ENCODE measurements at regions of chr13 and their contacts with region 1.

Region 1: DNA sequence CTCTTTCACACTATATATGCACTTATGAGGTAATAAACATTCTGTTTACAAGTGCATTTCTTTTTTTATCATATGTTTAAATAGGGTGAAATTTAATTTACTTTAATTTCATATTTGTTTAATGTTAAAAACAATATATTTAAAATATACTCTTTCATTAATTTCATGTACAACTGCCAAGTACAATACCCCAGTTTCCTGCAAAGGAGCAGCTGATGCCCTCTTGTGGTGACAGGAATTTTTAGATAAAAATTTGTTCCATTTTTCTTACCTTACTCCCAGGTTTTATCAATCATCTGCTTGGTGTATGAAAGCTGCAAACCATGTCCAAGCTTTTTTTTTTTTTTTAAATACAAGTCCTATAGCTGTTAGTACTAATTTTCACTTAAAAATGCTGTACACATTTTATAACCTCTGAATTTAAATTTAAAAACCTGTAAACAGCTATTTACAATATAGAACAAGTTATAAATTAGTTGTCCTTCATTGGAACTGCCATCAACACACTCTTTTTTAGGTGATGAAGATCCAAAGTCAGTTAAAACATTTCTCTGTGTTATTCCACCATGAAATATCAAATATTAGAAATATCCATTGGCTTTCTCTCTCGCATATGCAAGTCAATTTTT is 4.9 kb downstream of the PCDH20 start:
- DNase-seq: no peak
- ATAC-seq: no peak

Region 2: DNA sequence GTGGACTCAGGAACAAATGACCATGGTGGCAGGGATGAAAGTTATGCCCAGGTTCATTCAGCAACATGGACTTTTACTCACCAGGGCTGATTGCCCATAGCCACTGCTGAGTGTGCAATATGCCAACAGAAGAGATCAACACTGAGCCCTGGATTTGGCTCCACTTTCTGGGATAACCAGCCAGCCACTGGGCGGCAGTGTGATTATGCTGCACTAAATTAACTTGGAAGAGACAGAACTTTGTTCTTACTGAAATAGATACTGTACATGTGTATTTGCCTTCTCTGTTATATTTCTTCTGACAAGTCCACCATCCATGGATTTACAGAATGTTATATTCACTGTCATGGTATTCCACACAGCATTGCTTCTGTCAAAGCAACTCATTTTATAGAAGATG is 756.4 kb before region 1 on chr13:
- intact Hi-C with region 1: loop called in 1 of 2 experiments (anchors 10 kb)
- DNase-seq: peak; percentile 45
- ATAC-seq: peak; percentile 89 to 94

Region 3: DNA sequence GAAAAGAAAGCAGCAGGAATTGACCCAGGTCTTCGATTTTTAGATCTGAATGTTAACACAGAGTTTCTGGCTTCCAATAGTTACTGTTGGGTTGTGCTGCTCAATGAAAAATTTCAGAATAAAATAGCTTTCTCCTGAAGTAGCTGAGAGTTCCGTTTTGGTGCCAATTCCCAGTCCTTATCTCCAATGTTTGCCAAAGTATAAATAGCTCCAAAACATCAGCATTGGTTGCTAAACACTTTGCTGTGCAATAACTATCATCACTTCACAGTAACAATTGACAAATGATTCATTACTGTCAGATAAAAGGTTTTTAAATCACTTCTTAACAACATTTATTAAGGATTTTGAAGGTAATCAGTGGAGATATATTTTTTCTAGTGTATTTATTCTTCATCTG is 441.1 kb before region 1 on chr13:
- intact Hi-C with region 1: loop called in 1 of 2 experiments (anchors 10 kb)
- DNase-seq: no peak
- ATAC-seq: peak; percentile 90 to 92

Region 4: GRCh38 chr13:61136093-61136492 is 274.7 kb before region 1 on chr13:
- intact Hi-C with region 1: loop called in 1 of 2 experiments (anchors 10 kb)
- DNase-seq: no peak
- ATAC-seq: peak; percentile 54 to 63

Region 5: GRCh38 chr13:61286148-61286745 is 124.5 kb before region 1 on chr13:
- intact Hi-C with region 1: loop called in 1 of 2 experiments (anchors 5 kb)
- DNase-seq: no peak
- ATAC-seq: no peak

Measured in left cardiac atrium (tissue), 4 donors.